ENCODE measurements at regions of chr9 and their contacts with region 1.

Region 1: GRCh38 chr9:120936011-120936763 is 9.6 kb upstream of the TRAF1 start:
- H3K4me3 Mint-ChIP-seq: no peak overlapping the region
- H3K27ac Mint-ChIP-seq: peak overlapping the region; percentile 85
- H3K4me1 Mint-ChIP-seq: peaks cover 49% of the 10 kb centered on the region
- H3K27me3 Mint-ChIP-seq: no peaks in the 10 kb centered on the region

Region 2: GRCh38 chr9:120755827-120756434 is 180.3 kb before region 1 on chr9:
- intact Hi-C with region 1: loop called (anchors 2 kb)
- H3K4me3 Mint-ChIP-seq: no peak overlapping the region
- H3K27ac Mint-ChIP-seq: no peak overlapping the region
- H3K4me1 Mint-ChIP-seq: peaks cover 57% of the 10 kb centered on the region
- H3K27me3 Mint-ChIP-seq: no peaks in the 10 kb centered on the region

Region 3: GRCh38 chr9:120892748-120893610 is 43.2 kb before region 1 on chr9:
- intact Hi-C with region 1: no loop called
- H3K4me3 Mint-ChIP-seq: no peak overlapping the region
- H3K27ac Mint-ChIP-seq: no peak overlapping the region
- H3K4me1 Mint-ChIP-seq: peaks cover 31% of the 10 kb centered on the region
- H3K27me3 Mint-ChIP-seq: no peaks in the 10 kb centered on the region